Activated CD4-positive, alpha-beta T cell treated with anti-CD3 and anti-CD28 coated beads for 36 hours (primary cell): ENCODE measurements at regions of chr20 and their contacts with region 1.

Region 1: DNA sequence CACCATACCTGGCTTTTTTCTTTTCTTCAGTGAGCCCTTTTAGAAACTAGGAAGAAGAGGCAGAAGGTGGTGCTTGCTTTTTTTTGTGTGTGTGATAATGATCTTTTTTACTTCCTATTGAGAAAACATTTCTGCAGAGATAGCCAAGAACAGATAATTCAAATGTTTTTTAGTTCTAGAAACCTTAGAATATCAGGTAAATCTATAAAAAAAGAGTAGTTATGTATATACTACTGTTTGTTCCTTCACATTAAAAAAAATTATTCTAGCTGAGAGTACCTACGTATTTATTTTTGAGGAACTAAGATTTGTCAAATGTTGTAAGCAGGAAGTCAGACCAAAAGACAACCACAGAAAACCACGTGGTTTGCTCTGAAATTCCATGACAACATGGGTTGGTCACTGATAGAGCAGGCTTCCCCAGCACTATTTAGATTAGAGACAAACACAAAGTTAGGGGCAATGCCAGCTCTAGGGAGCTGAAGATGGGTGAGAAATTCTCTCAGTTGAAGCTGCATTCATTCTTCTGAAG is 12.8 kb downstream of the STK4 start:
- DNase-seq: peak; percentile 74
- ATAC-seq: peak; percentile 75
- H3K4me3 Mint-ChIP-seq: peak overlapping the region; percentile 10
- H3K27ac Mint-ChIP-seq: peak overlapping the region; percentile 95
- H3K4me1 Mint-ChIP-seq: peaks cover 90% of the 10 kb centered on the region
- H3K27me3 Mint-ChIP-seq: no peaks in the 10 kb centered on the region

Region 2: GRCh38 chr20:44495802-44496481 is 483.2 kb before region 1 on chr20:
- CTCF ChIA-PET with region 1: no interaction called
- POLR2A ChIA-PET with region 1: no interaction called
- intact Hi-C with region 1: loop called in 1 of 2 experiments (anchors 10 kb)
- DNase-seq: peak; percentile 27
- ATAC-seq: peak; percentile 84
- H3K4me3 Mint-ChIP-seq: no peak overlapping the region
- H3K27ac Mint-ChIP-seq: peak overlapping the region; percentile 78
- H3K4me1 Mint-ChIP-seq: peaks cover 50% of the 10 kb centered on the region
- H3K27me3 Mint-ChIP-seq: no peaks in the 10 kb centered on the region

Region 3: DNA sequence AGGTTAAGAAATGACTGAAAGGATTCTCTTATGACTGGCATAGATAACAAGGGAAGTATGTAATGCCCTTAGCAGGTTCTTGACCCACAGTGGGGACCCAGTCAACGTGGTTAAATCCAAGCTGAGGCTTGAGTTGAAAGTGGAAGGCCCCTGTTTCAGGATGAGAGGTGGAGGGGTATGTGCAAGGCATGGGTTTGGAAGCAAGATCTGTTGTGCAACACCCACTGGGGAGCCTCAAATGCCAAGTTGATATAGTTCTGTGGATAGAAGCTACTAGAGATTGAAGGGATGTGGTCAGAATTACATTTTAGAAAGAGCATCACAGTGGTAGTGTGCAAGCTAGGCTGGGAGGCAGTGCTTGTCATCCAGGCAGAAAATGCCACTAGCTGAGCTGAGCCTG is 64.2 kb before region 1 on chr20:
- CTCF ChIA-PET with region 1: no interaction called
- POLR2A ChIA-PET with region 1: no interaction called
- intact Hi-C with region 1: no loop called
- DNase-seq: peak; percentile 48
- ATAC-seq: peak; percentile 61
- H3K4me3 Mint-ChIP-seq: no peak overlapping the region
- H3K27ac Mint-ChIP-seq: peak overlapping the region; percentile 17
- H3K4me1 Mint-ChIP-seq: peaks cover 26% of the 10 kb centered on the region
- H3K27me3 Mint-ChIP-seq: no peaks in the 10 kb centered on the region

Region 4: GRCh38 chr20:44990425-44990824 is 11.3 kb after region 1 on chr20:
- CTCF ChIA-PET with region 1: interaction called, 18 read pairs
- POLR2A ChIA-PET with region 1: interaction called, 8 read pairs
- intact Hi-C with region 1: loop called (anchors 1 kb)
- DNase-seq: peak; percentile 81
- ATAC-seq: peak; percentile 90
- H3K4me3 Mint-ChIP-seq: peak overlapping the region; percentile 70
- H3K27ac Mint-ChIP-seq: peak overlapping the region; percentile 94
- H3K4me1 Mint-ChIP-seq: peaks cover 78% of the 10 kb centered on the region
- H3K27me3 Mint-ChIP-seq: no peaks in the 10 kb centered on the region